Heart right ventricle (tissue), 16 donors: ENCODE measurements at regions of chr17 and their contacts with region 1.

Region 1: DNA sequence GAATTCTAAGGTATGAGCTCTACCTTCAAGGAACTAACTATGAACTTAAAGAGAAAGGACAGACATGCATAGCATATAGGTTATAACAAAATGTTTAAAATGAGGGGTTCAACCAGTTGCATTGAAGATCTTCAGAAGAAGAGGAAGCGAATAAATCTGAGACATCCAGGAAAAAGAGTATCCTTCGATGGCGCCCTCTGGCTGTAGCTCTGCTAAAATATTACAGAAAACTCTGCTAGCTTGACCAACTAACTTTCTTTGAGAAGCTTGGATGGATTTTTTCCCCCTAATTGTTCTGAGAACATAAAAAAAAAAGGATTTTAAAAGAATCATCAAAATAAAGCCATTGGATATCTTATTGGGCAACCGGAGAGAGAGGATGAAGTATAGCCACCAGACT is 659.9 kb upstream of the SOX9 start:
- DNase-seq: no peak
- ATAC-seq: no peak
- H3K4me3 ChIP-seq: no peak overlapping the region
- H3K27ac ChIP-seq: no peak overlapping the region
- H3K4me1 ChIP-seq: no peaks in the 10 kb centered on the region
- H3K27me3 ChIP-seq: no peaks in the 10 kb centered on the region
- CTCF ChIP-seq: peak in 7 of 9 donors; percentile 25 to 53 (median 41)

Region 2: DNA sequence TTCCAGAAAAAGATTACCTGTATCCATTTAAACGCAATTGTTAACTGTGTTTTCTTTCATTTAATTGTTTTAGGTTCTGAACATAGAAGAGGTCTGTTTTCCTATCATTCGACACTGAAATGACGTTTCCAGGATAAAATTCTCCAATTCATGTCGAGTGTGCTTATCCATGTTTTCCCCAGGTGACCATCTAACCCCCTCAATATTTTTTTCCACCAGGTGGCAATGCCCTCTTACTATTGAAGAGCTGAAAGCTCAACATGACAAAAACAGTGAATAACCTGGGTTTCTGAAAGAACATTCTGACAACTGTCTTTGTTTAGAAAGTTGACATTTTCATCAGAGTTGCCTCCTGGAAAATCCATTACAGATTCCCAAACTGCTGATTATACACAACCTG is 342.9 kb before region 1 on chr17:
- intact Hi-C with region 1: loop called in 6 of 10 experiments (anchors 5 to 10 kb)
- DNase-seq: no peak
- ATAC-seq: no peak
- H3K4me3 ChIP-seq: no peak overlapping the region
- H3K27ac ChIP-seq: no peak overlapping the region
- H3K4me1 ChIP-seq: no peaks in the 10 kb centered on the region
- H3K27me3 ChIP-seq: peaks cover 0 to 5% (median 0%) of the 10 kb centered on the region in 7 donors
- CTCF ChIP-seq: peak; percentile 15 to 56 (median 45)

Region 3: GRCh38 chr17:71276079-71276478 is 184.9 kb before region 1 on chr17:
- intact Hi-C with region 1: no loop called
- DNase-seq: no peak
- ATAC-seq: no peak
- H3K4me3 ChIP-seq: no peak overlapping the region
- H3K27ac ChIP-seq: no peak overlapping the region
- H3K4me1 ChIP-seq: no peaks in the 10 kb centered on the region
- H3K27me3 ChIP-seq: no peaks in the 10 kb centered on the region
- CTCF ChIP-seq: no peak

Region 4: DNA sequence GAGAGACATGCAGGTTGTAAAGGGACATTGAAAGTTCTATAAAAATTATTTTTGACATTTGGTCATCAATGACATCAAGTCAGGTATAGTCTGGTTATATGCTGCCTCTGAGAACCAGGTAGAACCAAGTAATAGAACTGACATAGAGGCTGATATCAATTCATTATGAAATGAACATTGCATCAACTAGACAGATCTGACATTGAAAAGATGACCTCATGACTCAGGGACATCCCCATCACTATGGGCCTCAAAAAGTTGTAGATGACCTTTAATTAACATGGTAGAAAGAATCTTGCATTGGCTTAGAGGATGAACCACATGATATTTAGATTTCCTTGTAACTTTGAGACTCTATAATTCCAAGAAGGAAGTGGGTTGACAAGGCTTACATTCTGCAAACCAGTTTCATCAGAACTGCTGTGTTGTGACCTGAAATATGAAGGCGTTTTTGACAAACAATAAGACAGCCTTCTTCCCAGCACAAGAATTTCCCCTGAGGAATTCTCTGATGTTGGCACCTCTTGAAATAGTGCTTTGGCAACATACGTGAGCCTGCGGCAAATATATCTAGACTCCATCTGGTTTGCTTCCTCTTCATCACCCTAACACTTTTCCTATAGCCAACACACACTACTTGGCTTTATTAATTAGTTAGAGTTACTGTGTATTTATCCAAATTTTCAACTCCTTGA is 74.2 kb after region 1 on chr17:
- intact Hi-C with region 1: no loop called
- DNase-seq: no peak
- ATAC-seq: no peak
- H3K4me3 ChIP-seq: no peak overlapping the region
- H3K27ac ChIP-seq: no peak overlapping the region
- H3K4me1 ChIP-seq: no peaks in the 10 kb centered on the region
- H3K27me3 ChIP-seq: peaks cover 0 to 7% (median 0%) of the 10 kb centered on the region in 7 donors
- CTCF ChIP-seq: no peak

Region 5: DNA sequence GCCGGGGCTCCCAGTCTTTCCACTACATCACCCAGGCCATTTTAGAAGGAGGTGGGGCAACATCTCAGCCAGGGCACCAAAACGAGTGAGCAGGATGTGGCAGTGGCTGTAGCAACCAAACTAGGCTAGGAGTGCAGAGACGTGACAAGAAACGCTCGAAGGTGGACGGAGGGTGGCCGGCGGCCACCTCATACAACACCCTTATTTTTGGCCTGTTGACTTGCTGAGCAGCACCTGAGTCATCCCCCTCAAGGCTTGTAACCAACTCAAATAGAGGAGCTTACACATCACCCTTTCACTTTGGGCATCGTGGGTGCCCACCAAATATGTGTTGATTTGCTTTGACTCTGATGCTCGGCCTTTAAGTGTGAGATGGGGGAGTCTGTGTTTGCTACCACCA is 636.2 kb after region 1 on chr17:
- intact Hi-C with region 1: loop called in 1 of 10 experiments (anchors 10 kb)
- DNase-seq: no peak
- ATAC-seq: no peak
- H3K4me3 ChIP-seq: no peak overlapping the region
- H3K27ac ChIP-seq: no peak overlapping the region
- H3K4me1 ChIP-seq: no peaks in the 10 kb centered on the region
- H3K27me3 ChIP-seq: no peaks in the 10 kb centered on the region
- CTCF ChIP-seq: no peak